Left colon (tissue), 2 donors: ENCODE measurements at regions of chrX and their contacts with region 1.

Region 1: GRCh38 chrX:41116948-41117347 is 31.7 kb downstream of the USP9X start:
- DNase-seq: no peak
- ATAC-seq: peak; percentile 66

Region 2: DNA sequence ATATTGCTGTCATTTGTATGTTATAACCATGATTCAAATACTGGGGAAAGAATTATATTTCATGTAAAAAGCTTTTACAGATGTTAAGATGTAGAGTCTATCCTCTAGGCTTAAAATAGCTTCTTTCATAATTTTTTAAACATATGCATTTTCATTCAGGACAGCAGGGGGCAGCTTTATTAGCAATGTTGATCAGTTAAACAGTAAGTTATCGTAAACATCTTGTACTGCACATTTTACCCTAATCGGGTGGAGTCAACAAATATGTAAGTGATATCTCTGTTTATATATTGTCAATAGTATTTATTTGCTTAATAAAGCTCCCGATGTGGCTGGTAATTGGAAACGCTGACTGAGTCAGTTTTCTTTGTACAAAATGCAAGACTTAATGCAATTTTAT is 239.1 kb before region 1 on chrX:
- intact Hi-C with region 1: loop called in 1 of 2 experiments (anchors 5 kb)
- DNase-seq: no peak
- ATAC-seq: no peak